Heart right ventricle (tissue), 16 donors: ENCODE measurements at regions of chr4 and their contacts with region 1.

Region 1: GRCh38 chr4:39548428-39548921 is 21.2 kb upstream of the UGDH start:
- DNase-seq: no peak
- ATAC-seq: no peak
- H3K4me3 ChIP-seq: no peak overlapping the region
- H3K27ac ChIP-seq: no peak overlapping the region
- H3K4me1 ChIP-seq: no peaks in the 10 kb centered on the region
- H3K27me3 ChIP-seq: no peaks in the 10 kb centered on the region
- CTCF ChIP-seq: no peak

Region 2: GRCh38 chr4:39406763-39407583 is 141.5 kb before region 1 on chr4 and contains the start of gene KLB:
- intact Hi-C with region 1: no loop called
- DNase-seq: no peak
- ATAC-seq: no peak
- H3K4me3 ChIP-seq: no peak within 1 kb of the TSS
- H3K27ac ChIP-seq: no peak within 1 kb of the TSS
- H3K4me1 ChIP-seq: no peaks in the 10 kb centered on the region
- H3K27me3 ChIP-seq: peaks cover 0 to 12% (median 0%) of the 10 kb centered on the region in 7 donors
- CTCF ChIP-seq: no peak
- total RNA-seq, gene KLB: 0.08 to 0.53 (median 0.24) TPM in 6 of 10 donors, not detected in the others

Region 3: GRCh38 chr4:39527273-39528060 is 21.0 kb before region 1 on chr4 and contains the start of gene UGDH:
- intact Hi-C with region 1: loop called in 1 of 10 experiments (anchors 1 kb)
- DNase-seq: peak; percentile 96 to 97
- ATAC-seq: peak; percentile 98 to 100 (median 99)
- H3K4me3 ChIP-seq: peak within 1 kb of the TSS; percentile 74 to 98 (median 88)
- H3K27ac ChIP-seq: peak within 1 kb of the TSS; percentile 92 to 99 (median 96)
- H3K4me1 ChIP-seq: peaks cover 0 to 31% (median 21%) of the 10 kb centered on the region in 9 donors
- H3K27me3 ChIP-seq: no peaks in the 10 kb centered on the region
- CTCF ChIP-seq: peak in 5 of 9 donors; percentile 2 to 36 (median 26)
- total RNA-seq, gene UGDH: 10.8 to 27.3 (median 12.5) TPM